ENCODE measurements at regions of chr15 and their contacts with region 1.

Region 1: GRCh38 chr15:78979456-78980320 is 34.8 kb upstream of the CTSH start:
- DNase-seq: no peak
- H3K4me3 ChIP-seq: no peak overlapping the region
- CTCF ChIP-seq: peak; percentile 65

Region 2: GRCh38 chr15:78954889-78955288 is 24.8 kb before region 1 on chr15:
- CTCF ChIA-PET with region 1: interaction called, 11 read pairs
- POLR2A ChIA-PET with region 1: no interaction called
- DNase-seq: no peak
- H3K4me3 ChIP-seq: no peak overlapping the region
- CTCF ChIP-seq: no peak

Region 3: DNA sequence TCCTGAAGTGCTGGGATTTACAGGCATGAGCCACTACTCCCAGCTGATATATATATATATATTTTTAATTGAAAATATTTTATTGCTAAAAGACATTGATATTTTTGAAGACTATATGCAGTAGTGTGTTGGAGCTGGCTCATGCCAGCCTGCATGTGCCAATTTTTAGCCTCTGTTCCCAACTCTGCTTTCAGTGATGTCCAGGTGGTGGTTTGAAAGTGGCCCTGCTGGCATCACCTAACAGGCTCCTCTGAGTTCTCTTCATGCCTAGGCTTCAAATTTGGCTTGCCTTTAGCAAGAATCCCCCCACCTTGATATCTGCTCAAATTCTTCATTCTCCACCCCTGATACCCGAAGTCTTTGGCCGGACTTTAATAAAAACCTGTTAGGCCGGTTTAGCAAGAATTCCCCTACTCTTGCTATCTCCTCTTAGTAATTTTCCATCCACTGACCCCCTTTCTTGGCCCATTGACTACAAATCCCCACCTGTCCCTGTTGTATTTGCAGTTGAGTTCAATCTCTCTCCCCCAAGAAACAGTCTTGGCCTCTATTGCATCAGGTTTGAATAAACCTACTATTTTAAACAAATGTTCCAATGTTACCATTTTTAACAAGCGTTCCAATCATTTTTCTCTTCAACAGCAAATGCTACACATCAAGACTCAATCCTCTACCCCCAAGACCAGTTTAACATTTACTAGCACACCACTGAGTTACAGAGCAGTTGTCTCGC is 11.0 kb before region 1 on chr15:
- CTCF ChIA-PET with region 1: interaction called, 28 read pairs
- POLR2A ChIA-PET with region 1: no interaction called
- DNase-seq: no peak
- H3K4me3 ChIP-seq: no peak overlapping the region
- CTCF ChIP-seq: no peak

Region 4: DNA sequence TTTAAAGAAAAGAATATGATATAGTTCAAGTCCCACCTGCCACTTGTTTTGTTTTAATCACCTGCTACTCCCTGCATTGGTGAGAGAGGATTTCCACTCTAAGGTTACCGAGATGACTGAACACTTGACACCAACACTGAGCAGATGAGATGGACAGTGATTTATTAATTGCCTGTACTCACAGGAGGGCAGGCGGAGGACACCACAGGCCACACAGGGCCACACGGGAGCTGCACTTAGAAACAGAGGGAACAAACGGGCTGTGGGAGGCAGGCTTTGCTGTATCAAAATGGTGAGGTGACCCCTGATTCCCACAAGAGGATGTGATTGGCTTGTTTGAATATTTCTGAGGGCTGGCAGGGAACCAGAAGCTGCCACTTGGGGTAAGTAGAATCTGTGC is 463.2 kb after region 1 on chr15:
- CTCF ChIA-PET with region 1: no interaction called
- POLR2A ChIA-PET with region 1: no interaction called
- DNase-seq: no peak
- H3K4me3 ChIP-seq: no peak overlapping the region
- CTCF ChIP-seq: no peak

Measured in AG04449 (cell line).